Lower lobe of right lung (tissue), 2 donors: ENCODE measurements at regions of chr10 and their contacts with region 1.

Region 1: DNA sequence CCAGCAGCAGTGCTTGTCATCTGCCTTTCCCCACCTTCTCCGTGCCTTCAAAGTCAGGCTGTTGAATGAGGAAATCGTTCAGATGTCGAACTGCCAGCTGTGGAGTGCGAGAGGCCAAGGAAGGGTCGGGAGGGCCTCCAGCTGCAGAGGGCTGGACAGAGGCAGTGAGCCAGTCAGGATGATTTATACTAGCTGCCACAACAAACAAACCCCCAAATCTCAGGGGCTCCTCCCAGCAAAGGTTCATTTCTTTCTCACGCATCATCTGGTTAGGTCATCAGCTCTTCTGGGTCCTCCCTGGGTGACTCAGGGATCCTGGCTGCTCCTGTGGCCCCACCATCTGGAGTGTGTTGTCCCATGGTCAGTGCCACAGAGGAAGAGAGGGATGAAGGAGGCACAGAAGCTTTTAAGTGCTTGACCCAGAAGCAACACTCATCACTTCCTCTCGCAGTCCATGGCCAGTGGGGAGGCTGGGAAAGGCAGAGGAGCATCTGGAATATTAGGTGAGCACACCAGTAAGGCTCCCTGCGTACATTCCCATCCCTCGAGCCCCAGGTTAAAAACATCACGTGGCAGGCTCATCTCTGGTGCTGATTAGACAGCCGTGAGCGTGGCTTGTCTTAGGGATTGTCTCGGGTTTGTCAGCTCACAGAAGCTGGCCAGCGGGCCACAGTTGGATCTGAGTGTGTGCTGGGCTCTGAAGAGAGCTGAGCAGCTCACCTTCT is 140.7 kb downstream of the RGS10 start:
- DNase-seq: peak; percentile 43
- ATAC-seq: peak; percentile 64 to 69
- H3K4me3 ChIP-seq: no peak overlapping the region
- H3K27ac ChIP-seq: peak overlapping the region; percentile 66
- H3K4me1 ChIP-seq: peaks cover 43% of the 10 kb centered on the region
- H3K27me3 ChIP-seq: no peaks in the 10 kb centered on the region
- CTCF ChIP-seq: no peak

Region 2: GRCh38 chr10:119355930-119356329 is 45.9 kb before region 1 on chr10:
- intact Hi-C with region 1: loop called (anchors 10 kb)
- DNase-seq: no peak
- ATAC-seq: no peak
- H3K4me3 ChIP-seq: no peak overlapping the region
- H3K27ac ChIP-seq: no peak overlapping the region
- H3K4me1 ChIP-seq: peaks cover 26% of the 10 kb centered on the region
- H3K27me3 ChIP-seq: no peaks in the 10 kb centered on the region
- CTCF ChIP-seq: peak; percentile 29

Region 3: GRCh38 chr10:119807960-119808697 is 406.3 kb after region 1 on chr10:
- intact Hi-C with region 1: no loop called
- DNase-seq: no peak
- ATAC-seq: no peak
- H3K4me3 ChIP-seq: no peak overlapping the region
- H3K27ac ChIP-seq: no peak overlapping the region
- H3K4me1 ChIP-seq: no peaks in the 10 kb centered on the region
- H3K27me3 ChIP-seq: no peaks in the 10 kb centered on the region
- CTCF ChIP-seq: no peak